ENCODE measurements at regions of chr3 and their contacts with region 1.

Region 1: GRCh38 chr3:148955544-148956346 is 35.6 kb upstream of the GYG1 start:
- DNase-seq: peak; percentile 20
- CTCF ChIP-seq: peak; percentile 55

Region 2: DNA sequence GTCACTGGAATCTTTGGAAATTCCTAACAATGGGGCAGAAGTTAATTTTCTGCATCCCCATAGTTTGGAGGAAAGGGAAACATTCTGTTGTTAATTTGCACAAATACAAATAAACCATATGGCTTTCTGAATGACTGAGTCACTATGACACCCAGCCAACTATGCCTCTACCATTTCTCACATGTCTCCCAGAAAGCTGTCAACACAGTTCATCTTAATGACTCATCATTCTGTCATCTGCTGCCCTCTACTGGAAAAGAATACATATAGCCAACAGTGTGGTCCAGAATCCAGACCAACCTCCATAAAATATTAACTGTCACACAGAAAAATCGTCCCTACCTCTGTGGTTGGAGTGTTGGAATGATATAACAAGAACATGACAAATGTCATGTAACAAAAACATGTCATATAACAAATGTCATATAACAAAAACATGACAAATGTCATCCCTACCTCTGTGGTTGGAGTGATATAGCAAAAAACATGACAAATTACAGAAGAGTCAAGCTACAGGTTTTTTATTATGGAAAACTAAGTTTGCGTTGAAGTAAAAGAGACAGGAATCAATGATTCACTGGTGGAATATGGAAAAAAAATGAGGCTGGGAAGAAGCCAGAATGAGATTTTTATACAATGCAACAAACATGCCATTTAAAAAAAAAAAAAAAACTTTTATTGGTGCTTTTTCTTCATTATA is 12.1 kb before region 1 on chr3:
- CTCF ChIA-PET with region 1: interaction called, 28 read pairs
- POLR2A ChIA-PET with region 1: no interaction called
- DNase-seq: peak; percentile 73
- CTCF ChIP-seq: peak; percentile 72

Region 3: GRCh38 chr3:149234671-149235245 is 279.0 kb after region 1 on chr3:
- CTCF ChIA-PET with region 1: no interaction called
- POLR2A ChIA-PET with region 1: no interaction called
- DNase-seq: no peak
- CTCF ChIP-seq: no peak

Region 4: DNA sequence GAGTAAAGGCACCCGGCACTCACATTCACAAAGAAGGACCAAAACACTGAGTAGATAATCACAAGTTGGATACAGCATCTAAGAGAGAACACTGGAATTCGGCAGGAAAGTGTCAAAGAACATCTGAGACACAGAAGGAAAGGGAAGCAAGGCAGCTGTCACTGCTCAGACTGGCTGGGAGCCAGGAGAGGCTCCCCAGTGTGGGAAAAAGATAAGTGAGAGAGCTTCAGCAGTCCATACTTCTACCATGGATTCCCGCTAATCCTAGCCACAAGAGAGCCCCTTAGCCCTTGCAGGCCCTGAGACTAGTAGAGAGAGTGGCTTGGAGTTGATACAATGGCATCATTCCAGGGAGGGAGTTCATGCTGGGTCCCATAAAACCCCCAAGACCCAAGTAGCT is 302.6 kb after region 1 on chr3:
- CTCF ChIA-PET with region 1: interaction called, 10 read pairs
- POLR2A ChIA-PET with region 1: no interaction called
- DNase-seq: no peak
- CTCF ChIP-seq: no peak

Region 5: GRCh38 chr3:149273096-149273751 is 317.5 kb after region 1 on chr3:
- CTCF ChIA-PET with region 1: interaction called, 56 read pairs
- POLR2A ChIA-PET with region 1: no interaction called
- DNase-seq: peak; percentile 61
- CTCF ChIP-seq: peak; percentile 95

Region 6: DNA sequence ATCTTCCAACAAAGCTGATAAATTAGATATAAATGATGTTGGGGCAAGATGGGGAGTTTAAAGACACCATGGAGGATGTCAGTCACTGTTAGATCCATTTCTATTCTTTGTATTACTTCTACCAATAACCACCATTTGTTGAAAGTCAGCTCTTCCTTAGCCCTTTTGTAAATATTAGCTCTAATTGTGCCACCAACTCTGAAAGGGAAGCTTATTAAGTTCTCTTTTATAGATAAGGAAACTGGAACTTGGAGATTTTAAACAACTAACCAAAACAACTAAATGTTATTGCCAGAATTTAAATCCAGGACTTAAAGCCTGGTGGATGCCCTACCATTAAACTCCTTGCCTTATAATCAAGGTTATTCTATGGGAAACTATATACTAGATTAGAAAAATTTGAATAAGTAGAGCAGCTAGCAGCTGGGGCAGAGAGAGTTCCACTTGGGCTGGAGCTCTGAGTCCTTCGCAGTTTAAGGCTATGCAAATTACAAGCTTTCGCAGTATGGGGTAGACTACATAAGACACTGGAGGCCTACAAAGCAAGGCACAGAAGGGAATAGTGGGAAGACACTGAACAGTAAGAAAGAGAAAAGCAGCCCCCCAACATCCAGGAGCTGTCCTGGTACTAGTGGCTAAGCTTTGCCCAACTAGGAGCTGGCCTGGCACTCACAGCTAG is 325.1 kb after region 1 on chr3:
- CTCF ChIA-PET with region 1: interaction called, 56 read pairs
- POLR2A ChIA-PET with region 1: no interaction called
- DNase-seq: no peak
- CTCF ChIP-seq: no peak

Measured in GM10248 (cell line).